ENCODE measurements at regions of chr1 and their contacts with region 1.

Region 1: GRCh38 chr1:7042322-7043190 is 257.3 kb downstream of the CAMTA1 start:
- DNase-seq: peak; percentile 27
- ATAC-seq: peak; percentile 62
- H3K4me3 Mint-ChIP-seq: no peak overlapping the region
- H3K27ac Mint-ChIP-seq: no peak overlapping the region
- H3K4me1 Mint-ChIP-seq: peaks cover 24% of the 10 kb centered on the region
- H3K27me3 Mint-ChIP-seq: no peaks in the 10 kb centered on the region
- CTCF ChIP-seq: peak; percentile 57

Region 2: GRCh38 chr1:6962996-6963911 is 79.3 kb before region 1 on chr1:
- CTCF ChIA-PET with region 1: interaction called, 22 read pairs
- POLR2A ChIA-PET with region 1: no interaction called
- DNase-seq: peak; percentile 100
- ATAC-seq: peak; percentile 87
- H3K4me3 Mint-ChIP-seq: peak overlapping the region; percentile 72
- H3K27ac Mint-ChIP-seq: 0 out of 2 replicates have a peak overlapping the region, but pooled peaks have one; percentile 76
- H3K4me1 Mint-ChIP-seq: peaks cover 39% of the 10 kb centered on the region
- H3K27me3 Mint-ChIP-seq: peaks cover 3% of the 10 kb centered on the region
- CTCF ChIP-seq: no peak

Region 3: DNA sequence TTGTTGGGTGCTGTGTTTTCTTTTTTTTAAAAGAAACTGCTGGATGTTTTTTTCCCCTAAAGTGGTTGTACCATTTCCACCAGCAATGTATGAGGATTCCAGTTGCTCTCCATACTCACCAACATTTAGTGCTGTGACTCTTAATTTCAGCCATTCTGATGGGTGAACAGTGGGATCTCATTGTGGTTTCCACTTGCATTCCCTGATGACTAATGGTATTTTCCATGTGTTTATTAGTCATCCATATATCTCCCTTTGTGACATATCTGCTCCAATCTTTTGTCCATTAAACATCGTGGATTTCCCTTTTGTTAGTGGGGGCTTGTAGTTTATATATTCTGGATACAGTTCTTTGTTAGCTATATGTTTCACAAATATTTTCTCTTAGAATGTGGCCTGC is 51.3 kb before region 1 on chr1:
- CTCF ChIA-PET with region 1: interaction called, 14 read pairs
- POLR2A ChIA-PET with region 1: no interaction called
- DNase-seq: no peak
- ATAC-seq: no peak
- H3K4me3 Mint-ChIP-seq: no peak overlapping the region
- H3K27ac Mint-ChIP-seq: no peak overlapping the region
- H3K4me1 Mint-ChIP-seq: peaks cover 32% of the 10 kb centered on the region
- H3K27me3 Mint-ChIP-seq: no peaks in the 10 kb centered on the region
- CTCF ChIP-seq: no peak

Region 4: GRCh38 chr1:7013833-7014639 is 28.5 kb before region 1 on chr1:
- CTCF ChIA-PET with region 1: interaction called, 13 read pairs
- POLR2A ChIA-PET with region 1: no interaction called
- DNase-seq: no peak
- ATAC-seq: no peak
- H3K4me3 Mint-ChIP-seq: no peak overlapping the region
- H3K27ac Mint-ChIP-seq: no peak overlapping the region
- H3K4me1 Mint-ChIP-seq: no peaks in the 10 kb centered on the region
- H3K27me3 Mint-ChIP-seq: no peaks in the 10 kb centered on the region
- CTCF ChIP-seq: no peak

Region 5: GRCh38 chr1:7060745-7061144 is 18.2 kb after region 1 on chr1:
- CTCF ChIA-PET with region 1: interaction called, 11 read pairs
- POLR2A ChIA-PET with region 1: no interaction called
- DNase-seq: no peak
- ATAC-seq: no peak
- H3K4me3 Mint-ChIP-seq: no peak overlapping the region
- H3K27ac Mint-ChIP-seq: no peak overlapping the region
- H3K4me1 Mint-ChIP-seq: no peaks in the 10 kb centered on the region
- H3K27me3 Mint-ChIP-seq: no peaks in the 10 kb centered on the region
- CTCF ChIP-seq: no peak

Region 6: GRCh38 chr1:7084232-7084894 is 41.8 kb after region 1 on chr1:
- CTCF ChIA-PET with region 1: interaction called, 13 read pairs
- POLR2A ChIA-PET with region 1: no interaction called
- DNase-seq: peak; percentile 43
- ATAC-seq: peak; percentile 97
- H3K4me3 Mint-ChIP-seq: no peak overlapping the region
- H3K27ac Mint-ChIP-seq: no peak overlapping the region
- H3K4me1 Mint-ChIP-seq: no peaks in the 10 kb centered on the region
- H3K27me3 Mint-ChIP-seq: no peaks in the 10 kb centered on the region; the same call in 1 of the 2 replicates
- CTCF ChIP-seq: no peak

Region 7: GRCh38 chr1:7207875-7208646 is 165.5 kb after region 1 on chr1:
- CTCF ChIA-PET with region 1: interaction called, 134 read pairs
- POLR2A ChIA-PET with region 1: interaction called, 5 read pairs
- DNase-seq: peak; percentile 87
- ATAC-seq: peak; percentile 99
- H3K4me3 Mint-ChIP-seq: no peak overlapping the region
- H3K27ac Mint-ChIP-seq: peak overlapping the region; percentile 61
- H3K4me1 Mint-ChIP-seq: peaks cover 3% of the 10 kb centered on the region
- H3K27me3 Mint-ChIP-seq: no peaks in the 10 kb centered on the region
- CTCF ChIP-seq: peak; percentile 78

Region 8: DNA sequence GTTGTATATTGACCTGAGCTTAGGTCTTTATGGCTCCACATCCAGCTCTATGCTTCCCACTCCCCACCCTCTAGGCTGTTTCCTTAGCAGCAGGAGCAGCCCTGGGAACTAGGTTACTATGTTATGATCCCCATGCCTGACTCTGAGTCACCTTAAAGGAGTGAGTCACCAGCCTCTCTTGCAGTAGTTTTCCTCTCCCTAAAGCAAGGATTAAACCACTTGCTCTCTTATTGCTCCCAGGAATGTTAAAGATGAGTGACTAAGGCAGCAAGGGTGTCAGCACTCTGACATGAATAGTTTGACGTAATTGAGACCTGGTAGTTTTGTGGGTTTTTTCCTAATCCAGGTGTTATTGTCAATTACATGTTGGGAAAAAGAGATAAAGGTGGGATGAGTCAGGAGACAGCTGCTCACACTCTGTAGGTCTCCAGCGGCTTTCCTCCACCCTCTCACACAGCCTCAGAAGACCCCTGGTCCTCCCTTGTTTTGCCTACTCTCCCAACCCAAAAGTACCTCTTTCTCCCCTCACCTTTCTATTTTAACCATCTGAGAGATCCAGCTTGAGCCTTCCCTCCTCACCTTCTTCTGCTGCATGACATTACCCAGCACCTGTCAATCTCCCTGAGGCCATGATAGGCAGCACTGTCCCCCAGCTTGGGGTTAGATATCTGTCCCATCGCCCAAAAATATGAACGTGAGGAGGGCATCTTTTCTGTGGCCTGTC is 359.4 kb after region 1 on chr1:
- CTCF ChIA-PET with region 1: no interaction called
- POLR2A ChIA-PET with region 1: no interaction called
- DNase-seq: no peak
- ATAC-seq: peak; percentile 54
- H3K4me3 Mint-ChIP-seq: no peak overlapping the region
- H3K27ac Mint-ChIP-seq: peak overlapping the region; percentile 47; the same call in 1 of the 2 replicates
- H3K4me1 Mint-ChIP-seq: peaks cover 35% of the 10 kb centered on the region
- H3K27me3 Mint-ChIP-seq: no peaks in the 10 kb centered on the region
- CTCF ChIP-seq: no peak